ENCODE measurements at regions of chr9 and their contacts with region 1.

Region 1: DNA sequence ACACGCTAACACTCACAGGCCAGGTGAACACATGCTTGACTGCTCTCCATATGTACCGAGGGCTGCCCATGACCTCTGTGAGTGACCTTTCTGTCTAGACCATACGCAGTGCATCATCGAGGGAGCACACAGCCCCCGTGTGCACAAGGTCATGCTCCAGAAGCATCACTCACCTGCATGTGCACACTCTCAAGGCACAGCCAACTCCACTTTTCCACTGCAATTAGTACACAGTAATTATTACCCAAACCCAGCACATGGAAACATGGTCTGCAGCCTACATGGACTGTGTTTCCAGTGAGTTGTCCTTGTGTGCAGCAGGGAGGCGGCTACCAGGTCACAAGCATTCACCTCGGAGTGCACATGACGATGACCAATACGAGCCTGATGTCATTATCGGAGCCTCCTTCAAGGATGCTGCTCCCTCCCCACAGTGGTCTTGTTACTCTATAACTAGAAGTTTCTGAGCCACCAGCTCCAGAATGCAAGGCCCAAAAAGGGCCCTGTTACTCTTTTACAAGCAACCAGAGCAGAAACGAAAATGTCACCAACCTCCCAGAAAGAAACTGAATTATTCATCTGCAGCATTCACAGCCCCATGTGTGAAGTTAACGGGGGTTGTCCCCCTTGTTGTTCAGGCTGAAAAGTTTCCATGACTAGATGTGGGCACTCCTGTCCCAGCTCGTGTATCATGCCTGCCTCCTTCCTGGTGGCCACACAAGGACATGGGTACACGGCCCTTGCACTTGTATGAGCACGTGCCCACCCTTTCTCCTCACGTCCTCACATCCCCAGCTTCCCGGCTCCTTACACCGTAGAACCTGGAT is 31.2 kb downstream of the SEMA4D start:
- DNase-seq: peak in 5 of 10 donors; percentile 31 to 65 (median 49)
- ATAC-seq: peak in 1 of 2 donors; percentile 33
- H3K4me3 Mint-ChIP-seq: peak overlapping the region; percentile 75 to 90 (median 84)
- H3K27ac Mint-ChIP-seq: peak overlapping the region; percentile 94 to 99 (median 97)
- H3K4me1 Mint-ChIP-seq: peaks cover 71 to 99% (median 98%) of the 10 kb centered on the region in 4 donors
- H3K27me3 Mint-ChIP-seq: no peaks in the 10 kb centered on the region

Region 2: DNA sequence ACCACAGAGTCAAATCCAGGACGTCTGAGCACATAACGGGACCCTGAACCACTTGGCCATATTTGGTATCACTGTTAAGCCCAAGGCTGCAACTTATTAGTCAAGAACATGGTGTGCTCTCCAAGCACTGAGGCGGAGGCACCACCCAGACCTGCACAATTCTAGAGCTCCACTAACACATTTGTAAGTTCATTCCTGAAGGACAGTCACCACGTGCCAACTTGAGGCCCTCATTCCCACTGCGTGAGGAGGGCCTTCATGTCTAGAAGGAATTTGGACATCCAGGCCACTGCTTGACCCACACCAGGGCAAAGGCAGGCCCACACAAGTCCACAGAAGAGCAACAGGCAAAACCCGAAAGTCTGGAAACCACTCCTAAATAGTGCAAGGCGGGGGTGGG is 297.4 kb before region 1 on chr9:
- POLR2A ChIA-PET with region 1: no interaction called
- DNase-seq: no peak
- ATAC-seq: no peak
- H3K4me3 Mint-ChIP-seq: no peak overlapping the region
- H3K27ac Mint-ChIP-seq: no peak overlapping the region
- H3K4me1 Mint-ChIP-seq: no peaks in the 10 kb centered on the region
- H3K27me3 Mint-ChIP-seq: peaks cover 14 to 37% (median 29%) of the 10 kb centered on the region in 5 donors

Region 3: GRCh38 chr9:89388084-89388867 is 78.4 kb before region 1 on chr9:
- POLR2A ChIA-PET with region 1: no interaction called
- DNase-seq: no peak
- ATAC-seq: no peak
- H3K4me3 Mint-ChIP-seq: no peak overlapping the region
- H3K27ac Mint-ChIP-seq: peak overlapping the region in 3 of 10 donors; percentile 18 to 69 (median 47)
- H3K4me1 Mint-ChIP-seq: peaks cover 9 to 24% (median 10%) of the 10 kb centered on the region in 4 donors
- H3K27me3 Mint-ChIP-seq: no peaks in the 10 kb centered on the region

Region 4: GRCh38 chr9:89442981-89443814 is 23.5 kb before region 1 on chr9:
- POLR2A ChIA-PET with region 1: interaction called, 16 read pairs
- DNase-seq: no peak
- ATAC-seq: no peak
- H3K4me3 Mint-ChIP-seq: peak overlapping the region in 3 of 10 donors; percentile 51 to 71 (median 55)
- H3K27ac Mint-ChIP-seq: peak overlapping the region; percentile 94 to 99 (median 98)
- H3K4me1 Mint-ChIP-seq: peaks cover 45 to 95% (median 89%) of the 10 kb centered on the region in 4 donors
- H3K27me3 Mint-ChIP-seq: no peaks in the 10 kb centered on the region

Region 5: GRCh38 chr9:89483592-89484522 is 17.2 kb after region 1 on chr9:
- POLR2A ChIA-PET with region 1: interaction called, 62 read pairs
- DNase-seq: peak; percentile 65 to 89 (median 73)
- ATAC-seq: peak; percentile 71 to 84
- H3K4me3 Mint-ChIP-seq: peak overlapping the region; percentile 73 to 99 (median 95)
- H3K27ac Mint-ChIP-seq: peak overlapping the region; percentile 94 to 99 (median 95)
- H3K4me1 Mint-ChIP-seq: peaks cover 56 to 93% (median 91%) of the 10 kb centered on the region in 4 donors
- H3K27me3 Mint-ChIP-seq: no peaks in the 10 kb centered on the region

Region 6: GRCh38 chr9:89489548-89490530 is 23.2 kb after region 1 on chr9:
- POLR2A ChIA-PET with region 1: interaction called, 62 read pairs
- DNase-seq: peak in 4 of 10 donors; percentile 60 to 82 (median 78)
- ATAC-seq: peak; percentile 65 to 90
- H3K4me3 Mint-ChIP-seq: peak overlapping the region; percentile 49 to 99 (median 86)
- H3K27ac Mint-ChIP-seq: peak overlapping the region; percentile 26 to 97 (median 94)
- H3K4me1 Mint-ChIP-seq: peaks cover 60 to 97% (median 95%) of the 10 kb centered on the region in 4 donors
- H3K27me3 Mint-ChIP-seq: no peaks in the 10 kb centered on the region